ENCODE measurements at regions of chr20 and their contacts with region 1.

Region 1: DNA sequence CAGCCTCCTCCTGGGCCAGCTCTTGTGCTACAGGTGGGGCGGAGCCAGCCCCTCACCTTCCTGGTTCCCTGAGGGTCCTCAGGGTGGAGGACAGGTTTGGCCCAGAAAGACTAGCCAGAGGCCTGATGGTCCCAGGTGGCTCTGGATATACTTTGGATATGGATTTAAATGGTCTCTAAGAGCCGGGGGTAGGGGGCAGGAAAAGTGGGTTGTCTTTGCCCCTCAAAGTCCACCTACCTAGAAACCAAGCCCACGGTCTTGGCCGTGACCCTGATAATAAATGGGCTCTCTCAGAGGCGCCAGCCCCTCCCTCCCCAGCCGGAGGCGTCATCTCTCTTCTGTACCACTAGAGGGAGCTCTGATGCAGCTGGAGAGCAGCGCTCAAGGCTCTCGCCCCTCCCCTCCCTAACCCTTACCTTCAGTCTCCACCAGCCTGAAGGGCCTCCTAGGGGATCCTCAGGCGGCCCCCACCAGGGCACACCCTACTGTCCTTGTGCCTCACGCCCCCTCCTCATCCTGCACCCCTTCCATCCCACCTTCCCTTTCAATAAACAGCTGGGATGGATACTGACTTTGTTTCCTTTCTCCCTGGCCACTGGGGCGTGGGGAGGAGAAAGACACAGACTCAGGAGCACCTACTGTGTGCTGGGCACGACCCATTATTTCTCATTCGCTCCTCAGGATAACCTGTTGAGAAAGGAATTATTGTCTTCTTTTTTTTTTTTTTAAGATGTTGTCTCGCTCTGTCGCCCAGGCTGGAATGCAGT is 7.6 kb downstream of the NRSN2 start:
- DNase-seq: peak; percentile 92
- CTCF ChIP-seq: peak; percentile 96

Region 2: GRCh38 chr20:483813-484644 is 129.5 kb after region 1 on chr20:
- in situ Hi-C with region 1: loop called (anchors 5 kb)
- DNase-seq: no peak
- CTCF ChIP-seq: no peak

Region 3: DNA sequence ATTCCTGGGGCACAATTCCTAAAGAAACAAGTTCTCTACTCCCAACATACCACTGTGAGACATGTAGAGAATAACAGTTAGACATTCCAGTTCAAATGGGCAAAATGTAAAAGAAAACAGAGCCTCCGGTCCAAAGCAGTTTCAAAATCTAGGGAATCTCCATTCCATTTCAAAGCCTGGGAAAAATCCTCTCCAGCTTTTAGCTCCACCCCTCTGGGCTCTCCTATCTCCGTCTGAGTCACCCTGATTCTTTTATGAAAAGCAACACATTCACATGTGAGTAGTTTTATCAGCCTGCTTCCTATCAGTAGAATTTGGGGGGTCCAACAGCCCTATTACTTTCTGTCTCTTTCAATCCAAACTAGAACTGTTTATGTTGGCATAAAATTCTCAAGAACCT is 185.4 kb after region 1 on chr20:
- in situ Hi-C with region 1: no loop called
- DNase-seq: no peak
- CTCF ChIP-seq: no peak

Region 4: GRCh38 chr20:645318-646106 is 291.0 kb after region 1 on chr20:
- in situ Hi-C with region 1: loop called (anchors 10 kb)
- DNase-seq: peak; percentile 90
- CTCF ChIP-seq: peak; percentile 98

Measured in GM13976 (cell line).